ENCODE measurements at regions of chr15 and their contacts with region 1.

Region 1: GRCh38 chr15:37015035-37015434 is 85.3 kb downstream of the MEIS2 start:
- DNase-seq: no peak
- ATAC-seq: no peak
- H3K4me3 ChIP-seq: no peak overlapping the region
- H3K27ac ChIP-seq: no peak overlapping the region
- H3K4me1 ChIP-seq: peaks cover 6 to 15% of the 10 kb centered on the region in 2 donors
- H3K27me3 ChIP-seq: no peaks in the 10 kb centered on the region
- CTCF ChIP-seq: no peak

Region 2: GRCh38 chr15:36943508-36944361 is 71.3 kb before region 1 on chr15:
- intact Hi-C with region 1: loop called in 1 of 2 experiments (anchors 10 kb)
- DNase-seq: no peak
- ATAC-seq: no peak
- H3K4me3 ChIP-seq: no peak overlapping the region
- H3K27ac ChIP-seq: no peak overlapping the region
- H3K4me1 ChIP-seq: no peaks in the 10 kb centered on the region
- H3K27me3 ChIP-seq: no peaks in the 10 kb centered on the region
- CTCF ChIP-seq: no peak